IMR-90 (cell line): ENCODE measurements at regions of chr2 and their contacts with region 1.

Region 1: DNA sequence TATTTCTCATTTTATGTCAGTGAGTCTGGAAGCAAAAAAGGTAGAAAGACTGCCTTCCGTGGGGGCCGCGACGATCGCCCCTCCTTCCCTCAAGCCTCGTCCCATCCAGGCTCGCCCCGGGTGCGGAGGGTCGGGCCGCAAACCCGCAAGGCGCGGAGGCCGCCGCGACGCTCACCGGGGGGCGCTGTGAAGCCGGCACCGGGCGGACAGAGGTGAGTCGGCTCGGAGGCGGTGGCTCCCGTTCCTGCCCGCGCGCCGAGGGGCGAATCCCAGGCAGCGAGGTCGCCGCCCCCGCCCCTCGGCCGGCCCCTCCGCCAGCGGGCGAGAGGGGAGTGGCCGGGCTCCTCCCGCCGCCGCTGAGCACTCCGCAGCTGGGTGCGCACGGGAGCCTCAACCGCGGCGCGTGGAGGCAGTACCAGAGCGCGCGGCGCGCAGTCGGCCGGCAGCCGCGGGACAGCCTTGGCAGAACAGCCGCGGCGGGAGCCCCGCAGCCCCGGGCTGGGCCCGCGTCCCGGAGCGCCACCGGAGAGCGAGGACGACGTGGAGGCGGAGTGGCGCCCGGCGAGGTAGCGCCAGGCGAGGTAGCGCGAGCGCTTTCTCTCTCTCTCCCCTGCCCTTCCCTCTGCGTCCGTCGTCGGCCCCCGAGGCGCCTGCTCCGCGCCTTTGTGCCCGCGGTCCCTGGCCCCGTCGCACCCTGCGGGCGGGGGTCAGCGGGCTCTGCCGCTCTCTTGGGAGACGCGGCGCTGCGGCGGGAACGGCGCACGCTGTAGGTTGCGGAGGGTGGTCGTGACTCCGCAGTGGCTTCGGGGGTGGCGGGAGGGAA is at the start of gene MYO1B:
- DNase-seq: peak; percentile 74
- ATAC-seq: peak; percentile 81
- H3K4me3 ChIP-seq: peak within 1 kb of the TSS; percentile 97
- H3K27ac ChIP-seq: peak within 1 kb of the TSS; percentile 97
- H3K4me1 ChIP-seq: peaks cover 14% of the 10 kb centered on the region
- H3K27me3 ChIP-seq: no peaks in the 10 kb centered on the region
- CTCF ChIP-seq: peak; percentile 61
- POLR2A ChIP-seq: peak; percentile 78
- RAD21 ChIP-seq: peak; percentile 65
- total RNA-seq, gene MYO1B: 116 and 167 TPM in 2 replicates

Region 2: DNA sequence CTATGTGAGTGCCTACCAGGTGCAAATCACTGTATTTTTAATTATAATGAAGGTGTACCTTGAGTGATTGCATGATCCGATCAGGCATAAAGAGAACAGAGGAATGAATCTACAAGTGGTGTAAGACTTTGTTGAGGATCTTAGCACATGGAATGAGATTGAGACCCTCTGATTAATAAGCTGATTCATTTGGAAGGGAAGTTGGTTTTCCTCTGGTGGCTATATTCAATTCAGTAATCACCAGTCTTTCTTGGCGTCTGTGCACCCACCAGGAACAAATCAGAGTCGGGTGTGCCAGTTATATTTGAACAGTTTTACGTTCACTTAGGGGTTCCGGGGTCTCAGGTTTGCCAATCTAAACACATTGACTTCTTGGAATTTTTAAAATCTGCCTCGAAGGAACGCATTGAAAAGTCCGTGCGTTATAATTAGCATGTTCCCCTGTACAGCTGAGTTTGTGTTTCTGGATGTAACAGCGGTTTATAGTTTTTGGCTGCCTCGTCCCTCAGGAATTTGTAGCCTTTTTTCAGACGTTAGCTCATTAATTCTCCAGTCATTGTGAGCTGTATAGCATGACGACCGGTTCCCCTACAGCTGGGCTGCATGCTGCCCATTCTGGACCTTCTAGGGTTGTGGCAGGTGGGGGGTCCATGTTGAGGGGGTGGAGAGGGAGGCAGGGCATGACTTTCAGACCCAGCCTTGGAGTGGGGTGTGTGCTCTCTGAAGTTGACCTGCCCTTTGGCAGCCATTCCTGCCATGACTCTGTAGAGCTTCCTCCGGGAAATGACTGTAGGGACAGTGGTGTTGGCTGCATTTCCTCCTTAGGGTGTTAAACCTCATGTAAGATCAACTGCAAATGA is 20.3 kb after region 1 on chr2:
- CTCF ChIA-PET with region 1: no interaction called
- POLR2A ChIA-PET with region 1: interaction called, 4 read pairs
- dilution Hi-C with region 1: no loop called
- in situ Hi-C with region 1: no loop called
- intact Hi-C with region 1: loop called (anchors 2 kb)
- DNase-seq: peak; percentile 70
- ATAC-seq: peak; percentile 52
- H3K4me3 ChIP-seq: no peak overlapping the region
- H3K27ac ChIP-seq: peak overlapping the region; percentile 70
- H3K4me1 ChIP-seq: peaks cover 25% of the 10 kb centered on the region
- H3K27me3 ChIP-seq: no peaks in the 10 kb centered on the region
- CTCF ChIP-seq: no peak
- POLR2A ChIP-seq: no peak
- RAD21 ChIP-seq: no peak

Region 3: DNA sequence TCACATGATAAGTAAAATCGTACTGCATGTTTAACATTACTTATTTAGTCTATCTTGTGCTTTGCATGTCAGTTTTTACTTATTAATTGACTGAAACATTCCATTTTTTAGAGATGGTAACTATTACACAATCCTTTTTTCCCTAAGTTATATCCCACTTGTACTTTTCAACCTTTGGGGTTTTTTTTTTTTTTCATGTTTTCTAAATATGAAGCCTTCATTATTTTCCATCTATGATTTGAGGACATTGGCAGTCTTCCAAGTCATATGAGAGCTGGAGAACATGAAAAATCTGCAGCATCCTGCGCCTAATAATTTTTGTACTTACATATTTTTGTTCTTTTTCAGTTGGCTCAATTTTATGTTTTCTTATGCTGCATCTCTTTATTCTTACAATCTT is 113.9 kb after region 1 on chr2:
- CTCF ChIA-PET with region 1: no interaction called
- POLR2A ChIA-PET with region 1: interaction called, 14 read pairs
- dilution Hi-C with region 1: no loop called
- in situ Hi-C with region 1: no loop called
- intact Hi-C with region 1: no loop called
- DNase-seq: no peak
- ATAC-seq: no peak
- H3K4me3 ChIP-seq: no peak overlapping the region
- H3K27ac ChIP-seq: no peak overlapping the region
- H3K4me1 ChIP-seq: peaks cover 12% of the 10 kb centered on the region
- H3K27me3 ChIP-seq: no peaks in the 10 kb centered on the region
- CTCF ChIP-seq: no peak
- POLR2A ChIP-seq: no peak
- RAD21 ChIP-seq: no peak

Region 4: DNA sequence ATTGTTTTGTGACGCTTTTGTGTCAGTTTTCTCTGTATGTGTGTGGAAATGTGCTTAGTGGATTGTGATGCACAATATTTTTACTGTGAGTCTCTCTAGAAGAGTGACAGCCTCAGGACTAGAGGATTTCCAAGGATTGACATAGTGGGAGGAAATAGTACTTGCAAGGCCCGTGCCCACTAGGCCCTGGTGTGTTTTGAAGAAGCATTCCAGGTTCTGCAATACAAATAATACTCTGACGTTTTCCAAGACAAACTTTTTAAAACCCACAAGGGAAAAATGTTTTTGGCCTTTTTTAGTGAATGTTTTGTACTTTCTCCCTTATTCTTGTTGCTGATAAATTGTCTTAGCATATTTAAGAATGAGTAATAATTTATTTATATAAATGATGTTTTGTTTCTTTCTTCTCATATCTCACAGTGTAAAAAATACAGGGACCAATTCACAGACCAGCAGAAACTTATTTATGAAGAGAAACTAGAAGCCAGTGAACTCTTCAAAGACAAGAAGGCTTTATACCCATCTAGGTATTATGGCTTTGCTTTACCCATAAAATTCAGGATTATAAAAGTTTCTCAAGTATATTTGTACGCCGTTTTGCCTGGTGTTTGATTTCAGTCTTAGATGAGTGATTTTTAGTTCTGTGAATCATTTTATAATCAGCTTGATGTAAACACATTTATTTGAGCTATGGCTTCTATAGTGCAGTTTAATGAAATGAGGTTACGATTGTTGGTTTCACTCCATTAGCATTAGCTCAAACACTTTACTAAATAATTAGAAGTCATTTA is 165.6 kb after region 1 on chr2:
- CTCF ChIA-PET with region 1: no interaction called
- POLR2A ChIA-PET with region 1: no interaction called
- dilution Hi-C with region 1: no loop called
- in situ Hi-C with region 1: no loop called
- intact Hi-C with region 1: loop called (anchors 5 kb)
- DNase-seq: peak; percentile 41
- ATAC-seq: peak; percentile 64
- H3K4me3 ChIP-seq: no peak overlapping the region
- H3K27ac ChIP-seq: peak overlapping the region; percentile 77; the same call in 1 of the 2 replicates
- H3K4me1 ChIP-seq: peaks cover 7% of the 10 kb centered on the region
- H3K27me3 ChIP-seq: no peaks in the 10 kb centered on the region
- CTCF ChIP-seq: no peak
- POLR2A ChIP-seq: no peak
- RAD21 ChIP-seq: no peak

Region 5: DNA sequence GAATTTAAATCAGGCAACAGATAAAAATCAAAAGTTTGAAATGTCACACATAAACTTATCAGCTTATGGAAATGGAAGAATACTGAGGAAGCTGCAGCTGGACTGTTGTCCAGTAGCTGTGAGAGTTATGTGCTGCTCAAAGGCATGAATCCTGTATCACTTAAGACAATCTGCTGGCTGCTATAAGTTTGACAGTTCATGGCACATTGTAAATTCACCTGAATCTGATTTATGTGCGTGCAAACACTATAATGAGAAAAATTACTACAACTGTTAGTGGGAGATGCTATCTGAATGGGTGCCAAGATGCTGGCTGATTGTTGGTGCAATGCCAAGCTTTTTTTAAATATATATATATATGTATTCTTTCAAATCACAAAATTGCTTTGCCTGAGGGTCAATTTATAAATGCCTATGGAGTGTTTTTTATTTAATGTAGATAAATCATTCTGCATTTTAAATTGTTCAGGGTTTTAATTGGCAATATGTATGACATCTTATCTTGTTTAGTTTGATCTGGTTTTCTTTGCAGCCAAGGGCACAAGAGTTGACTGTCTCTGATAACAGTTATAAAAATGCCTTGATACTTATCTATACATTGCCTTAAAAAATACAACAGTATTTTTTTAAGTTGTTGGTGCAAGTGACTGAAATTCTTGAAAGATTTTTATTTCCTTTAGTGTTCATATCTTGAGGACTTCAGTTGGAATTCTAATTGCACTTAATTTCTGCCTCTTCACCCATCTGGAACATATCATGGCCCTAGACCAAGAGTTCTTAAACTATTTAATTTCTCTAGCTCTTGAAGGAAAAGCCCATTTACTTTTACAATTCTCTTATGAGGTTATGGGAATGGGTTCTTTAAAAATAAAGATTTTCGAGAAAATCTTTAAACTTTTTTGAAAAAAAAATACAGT is 553.0 kb after region 1 on chr2:
- CTCF ChIA-PET with region 1: no interaction called
- POLR2A ChIA-PET with region 1: no interaction called
- dilution Hi-C with region 1: no loop called
- in situ Hi-C with region 1: no loop called
- intact Hi-C with region 1: no loop called
- DNase-seq: no peak
- ATAC-seq: no peak
- H3K4me3 ChIP-seq: no peak overlapping the region
- H3K27ac ChIP-seq: no peak overlapping the region
- H3K4me1 ChIP-seq: no peaks in the 10 kb centered on the region
- H3K27me3 ChIP-seq: peaks cover 2% of the 10 kb centered on the region; the same call in 1 of the 2 replicates
- CTCF ChIP-seq: no peak
- POLR2A ChIP-seq: no peak
- RAD21 ChIP-seq: no peak